ENCODE measurements at regions of chr16 and their contacts with region 1.

Region 1: DNA sequence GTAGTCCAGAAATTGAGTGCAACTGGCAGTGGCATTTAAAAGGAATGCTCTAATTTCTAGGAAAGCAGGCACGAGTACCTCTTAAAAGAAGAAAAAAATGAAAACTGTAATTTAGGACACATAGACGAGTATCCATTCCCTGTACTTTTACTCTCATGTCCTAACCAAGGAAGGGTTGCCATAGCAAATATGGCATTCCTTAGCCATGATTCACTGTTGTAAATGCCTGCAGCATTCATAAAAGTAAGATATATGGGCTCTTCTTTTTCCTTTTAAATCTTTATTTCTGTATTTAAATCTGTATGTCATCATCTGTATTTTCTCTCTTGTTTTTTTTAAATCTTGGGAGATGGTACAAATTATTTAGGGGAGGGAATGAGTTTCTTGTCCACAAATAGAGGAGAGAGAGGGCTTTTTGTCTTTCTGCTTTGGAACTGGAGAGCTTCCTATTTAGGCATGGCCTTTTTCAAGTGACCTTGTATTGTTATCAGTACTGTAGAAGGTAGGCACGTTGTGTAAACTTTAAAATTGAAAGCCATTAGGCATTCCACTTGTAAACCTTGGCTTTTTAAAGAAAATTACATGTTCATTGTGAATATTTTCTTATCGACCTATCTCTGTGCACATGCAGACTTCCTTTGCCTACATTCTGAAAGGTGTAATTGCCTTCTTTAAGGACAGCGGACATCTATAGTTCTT is 50.0 kb downstream of the TENT4B start:
- DNase-seq: no peak

Region 2: DNA sequence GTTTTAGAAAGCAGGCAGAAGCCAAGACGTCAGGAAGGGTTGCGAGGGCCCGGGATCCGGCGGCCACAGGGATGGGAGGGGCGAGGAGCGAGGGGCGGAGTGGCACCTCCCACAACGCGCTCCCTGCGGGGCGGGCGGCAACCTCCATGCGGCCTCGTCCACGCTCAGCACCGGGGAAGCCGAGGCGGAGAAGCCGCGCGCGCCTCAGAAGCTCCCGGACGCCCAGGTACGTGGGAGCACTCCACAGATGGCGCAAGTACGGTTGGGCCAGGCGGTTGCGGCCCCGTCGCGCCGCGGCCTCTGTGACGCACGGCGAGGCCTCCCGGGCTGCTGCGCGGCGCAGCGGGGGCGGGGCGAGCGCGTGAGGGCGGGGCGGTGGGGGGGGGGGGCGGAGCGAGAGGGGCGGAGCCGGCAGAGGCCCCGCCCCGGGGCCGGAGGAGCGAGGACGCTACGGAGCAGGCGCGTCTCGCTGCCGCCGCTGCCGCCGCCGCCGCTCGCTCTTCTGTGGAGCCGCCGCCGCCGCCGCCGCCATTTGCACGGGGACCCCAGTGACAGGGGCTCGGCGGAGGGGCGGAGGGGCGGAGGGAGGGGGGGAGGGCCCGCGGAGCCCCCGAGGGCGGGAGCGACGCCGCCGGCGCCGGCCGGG is 50.1 kb before region 1 on chr16 and contains the start of gene TENT4B:
- intact Hi-C with region 1: loop called (anchors 10 kb)
- DNase-seq: peak; percentile 67 to 95 (median 90)

Measured in head of caudate nucleus (tissue), 42 donors.